Activated CD4-positive, alpha-beta memory T cell treated with anti-CD3 and anti-CD28 coated beads, Interleukin-2, amount 10 ng/mL, durations not matched to agents 7 days and 5 days (primary cell): ENCODE measurements at regions of chr19 and their contacts with region 1.

Region 1: DNA sequence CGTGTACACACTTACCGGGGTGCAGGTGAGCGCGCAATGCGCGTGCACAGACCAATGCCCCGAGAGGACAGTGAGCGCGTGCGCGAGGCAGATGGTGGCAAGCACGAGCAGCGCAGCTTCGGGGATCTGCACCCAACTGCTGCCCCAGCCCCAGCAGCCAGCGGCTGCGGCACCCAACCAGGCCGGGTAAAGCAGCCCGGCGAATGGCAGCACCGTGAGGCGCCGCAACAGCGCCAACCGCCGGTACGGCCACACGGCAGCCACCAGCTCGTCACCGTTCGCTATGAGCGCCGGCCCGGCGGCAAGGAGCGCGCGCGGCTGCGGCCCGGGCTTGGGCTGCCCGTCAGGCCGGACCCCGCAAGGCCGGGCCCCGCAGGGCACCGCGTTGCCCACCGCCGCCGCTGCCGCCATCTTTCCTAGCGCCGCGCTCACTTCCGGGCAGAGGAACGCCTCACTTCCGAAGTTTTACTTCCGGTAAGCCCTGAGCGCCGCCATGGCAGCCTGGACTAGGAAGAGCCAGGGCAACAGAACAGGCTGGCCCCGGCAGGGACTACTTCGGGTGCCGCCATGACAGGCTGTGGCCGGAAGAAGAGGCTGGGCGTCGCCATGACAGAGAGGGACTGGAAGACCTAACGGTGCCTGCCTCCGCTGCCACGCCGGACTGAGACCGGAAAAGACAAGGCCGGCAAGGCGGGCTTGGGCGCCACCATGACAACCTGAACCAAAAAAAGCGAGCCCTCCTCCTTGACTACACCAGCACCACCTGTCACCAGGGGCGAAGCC is at the start of gene ATP13A1:
- DNase-seq: peak; percentile 95
- H3K4me3 Mint-ChIP-seq: peak within 1 kb of the TSS; percentile 81
- H3K27ac Mint-ChIP-seq: peak within 1 kb of the TSS; percentile 98
- H3K4me1 Mint-ChIP-seq: peaks cover 40% of the 10 kb centered on the region
- H3K27me3 Mint-ChIP-seq: no peaks in the 10 kb centered on the region
- total RNA-seq, gene ATP13A1: 102 to 107 TPM

Region 2: DNA sequence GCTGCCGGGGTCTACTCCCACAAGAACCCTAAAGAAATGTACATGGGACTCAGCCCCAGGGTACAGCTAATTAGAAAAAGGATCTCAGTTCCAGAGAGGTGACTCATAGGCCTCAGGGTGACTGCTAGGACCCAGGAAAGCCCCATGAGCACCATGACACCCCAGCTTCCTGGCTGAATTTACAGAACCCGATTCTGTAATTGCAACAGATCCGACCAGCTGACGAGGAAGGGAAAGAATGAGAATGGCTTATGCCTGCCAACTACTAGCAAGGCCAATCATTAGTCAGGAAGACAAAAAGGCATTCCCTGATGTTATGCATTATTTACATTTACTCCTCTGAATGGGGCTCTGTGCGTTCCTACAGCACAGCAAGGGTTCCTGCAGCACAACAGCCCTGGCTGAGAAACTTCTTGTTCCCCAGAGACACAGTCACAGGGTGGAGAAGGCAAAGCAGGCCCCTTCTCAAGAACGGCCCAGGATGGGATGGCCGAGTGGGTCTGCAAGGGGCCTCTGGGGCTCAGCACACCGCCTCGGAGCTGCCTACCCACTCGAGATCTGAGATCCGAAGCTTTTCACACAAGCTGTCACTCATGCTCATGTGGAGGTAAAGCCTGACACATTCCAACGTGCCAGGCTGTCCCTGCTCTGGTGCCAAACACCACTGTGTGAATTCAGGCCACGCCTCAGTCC is 72.2 kb before region 1 on chr19:
- CTCF ChIA-PET with region 1: interaction called, 5 read pairs
- POLR2A ChIA-PET with region 1: interaction called, 22 read pairs
- DNase-seq: peak; percentile 80
- H3K4me3 Mint-ChIP-seq: peak overlapping the region; percentile 43
- H3K27ac Mint-ChIP-seq: peak overlapping the region; percentile 93
- H3K4me1 Mint-ChIP-seq: peaks cover 80% of the 10 kb centered on the region
- H3K27me3 Mint-ChIP-seq: no peaks in the 10 kb centered on the region

Region 3: GRCh38 chr19:19627621-19628500 is 35.6 kb before region 1 on chr19 and contains the start of gene LPAR2:
- CTCF ChIA-PET with region 1: no interaction called
- POLR2A ChIA-PET with region 1: interaction called, 17 read pairs
- DNase-seq: peak; percentile 74
- H3K4me3 Mint-ChIP-seq: peak within 1 kb of the TSS; percentile 83
- H3K27ac Mint-ChIP-seq: peak within 1 kb of the TSS; percentile 91
- H3K4me1 Mint-ChIP-seq: peaks cover 32% of the 10 kb centered on the region
- H3K27me3 Mint-ChIP-seq: no peaks in the 10 kb centered on the region
- total RNA-seq, gene LPAR2: 43.2 to 46.2 TPM

Region 4: DNA sequence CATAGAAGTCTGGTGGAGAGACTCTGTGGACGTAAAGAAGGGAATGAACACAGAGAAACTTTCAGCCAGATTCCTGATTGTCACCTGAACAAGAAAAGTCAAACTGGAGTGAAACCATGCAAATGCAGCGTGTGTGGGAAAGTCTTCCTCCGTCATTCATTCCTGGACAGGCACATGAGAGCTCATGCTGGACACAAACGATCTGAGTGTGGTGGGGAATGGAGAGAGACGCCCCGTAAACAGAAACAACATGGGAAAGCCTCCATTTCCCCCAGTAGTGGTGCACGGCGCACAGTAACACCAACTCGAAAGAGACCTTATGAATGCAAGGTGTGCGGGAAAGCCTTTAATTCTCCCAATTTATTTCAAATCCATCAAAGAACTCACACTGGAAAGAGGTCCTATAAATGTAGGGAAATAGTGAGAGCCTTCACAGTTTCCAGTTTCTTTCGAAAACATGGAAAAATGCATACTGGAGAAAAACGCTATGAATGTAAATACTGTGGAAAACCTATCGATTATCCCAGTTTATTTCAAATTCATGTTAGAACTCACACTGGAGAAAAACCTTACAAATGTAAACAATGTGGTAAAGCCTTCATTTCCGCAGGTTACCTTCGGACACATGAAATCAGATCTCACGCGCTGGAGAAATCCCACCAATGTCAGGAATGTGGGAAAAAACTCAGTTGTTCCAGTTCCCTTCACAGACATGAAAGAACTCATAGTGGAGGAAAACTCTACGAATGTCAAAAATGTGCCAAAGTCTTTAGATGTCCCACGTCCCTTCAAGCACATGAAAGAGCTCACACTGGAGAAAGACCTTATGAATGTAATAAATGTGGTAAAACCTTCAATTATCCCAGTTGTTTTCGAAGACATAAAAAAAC is 16.0 kb after region 1 on chr19:
- CTCF ChIA-PET with region 1: no interaction called
- POLR2A ChIA-PET with region 1: interaction called, 27 read pairs
- DNase-seq: no peak
- H3K4me3 Mint-ChIP-seq: no peak overlapping the region
- H3K27ac Mint-ChIP-seq: no peak overlapping the region
- H3K4me1 Mint-ChIP-seq: peaks cover 9% of the 10 kb centered on the region
- H3K27me3 Mint-ChIP-seq: no peaks in the 10 kb centered on the region

Region 5: DNA sequence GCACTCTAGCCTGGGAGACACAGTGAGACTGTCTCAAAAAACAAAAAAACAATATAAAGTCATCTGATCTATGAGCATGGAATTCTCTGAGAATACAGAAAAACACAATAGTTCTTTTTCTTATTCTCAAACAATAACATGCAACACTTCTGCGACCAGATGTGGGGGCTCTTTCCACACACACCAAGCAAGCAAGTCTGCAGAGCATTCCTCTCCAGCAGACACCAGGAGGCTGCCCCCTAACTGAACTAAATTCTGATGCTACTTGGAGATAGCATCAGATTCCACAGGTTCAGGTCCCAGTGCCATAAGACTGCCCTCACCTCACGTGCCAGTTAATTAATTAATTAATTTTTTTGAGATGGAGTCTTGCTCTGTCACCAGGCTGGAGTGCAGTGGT is 32.9 kb after region 1 on chr19:
- CTCF ChIA-PET with region 1: no interaction called
- POLR2A ChIA-PET with region 1: no interaction called
- DNase-seq: no peak
- H3K4me3 Mint-ChIP-seq: no peak overlapping the region
- H3K27ac Mint-ChIP-seq: no peak overlapping the region
- H3K4me1 Mint-ChIP-seq: no peaks in the 10 kb centered on the region
- H3K27me3 Mint-ChIP-seq: no peaks in the 10 kb centered on the region

Region 6: DNA sequence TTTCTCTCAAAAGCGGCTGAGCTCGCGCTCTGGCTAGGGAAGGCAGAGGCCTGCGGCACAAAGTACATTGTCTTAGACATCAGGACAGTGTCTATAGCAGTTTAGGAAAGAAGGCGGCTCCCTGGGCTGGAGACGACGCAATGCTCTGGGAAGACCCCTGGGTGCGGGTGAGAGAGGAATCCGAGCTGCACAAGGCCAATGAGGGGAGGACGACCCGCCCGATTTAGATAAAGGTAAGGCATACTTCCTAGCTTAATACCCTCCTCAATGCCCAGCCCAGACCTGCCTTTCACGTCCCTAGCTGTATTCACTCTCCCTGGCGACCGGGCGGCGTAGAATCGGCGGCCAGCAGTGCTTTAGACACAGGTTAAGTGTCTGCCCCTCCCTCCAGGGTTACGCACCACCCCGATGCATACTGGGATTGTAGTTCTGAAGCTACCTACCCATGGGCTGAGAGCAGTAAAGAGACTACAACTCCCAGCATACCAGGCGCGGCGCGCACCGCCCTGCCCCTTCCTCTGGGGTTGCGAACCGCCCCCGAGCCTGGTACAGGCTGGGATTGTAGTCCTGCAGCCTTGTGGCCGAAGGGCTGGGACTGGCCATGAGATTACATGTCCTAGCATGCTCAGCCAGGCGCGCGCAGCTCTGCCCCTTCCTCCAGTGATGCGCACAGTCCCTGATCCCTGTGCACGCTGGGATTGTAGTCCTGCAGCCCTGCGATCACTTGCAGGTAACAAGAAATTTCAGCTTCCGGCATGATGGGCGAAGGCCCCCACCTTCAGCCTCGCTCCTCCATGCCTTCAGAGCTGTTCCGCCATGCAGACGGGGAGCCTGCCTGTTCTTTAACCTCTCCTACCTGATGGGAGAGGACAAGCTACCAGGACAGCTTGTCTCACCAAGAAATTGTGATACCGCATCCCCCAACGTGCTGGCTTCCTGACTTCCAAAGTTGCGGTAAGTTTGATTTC is 112.9 kb after region 1 on chr19:
- CTCF ChIA-PET with region 1: no interaction called
- POLR2A ChIA-PET with region 1: interaction called, 22 read pairs
- DNase-seq: peak; percentile 94
- H3K4me3 Mint-ChIP-seq: peak overlapping the region; percentile 92
- H3K27ac Mint-ChIP-seq: peak overlapping the region; percentile 77
- H3K4me1 Mint-ChIP-seq: peaks cover 41% of the 10 kb centered on the region
- H3K27me3 Mint-ChIP-seq: no peaks in the 10 kb centered on the region

Region 7: DNA sequence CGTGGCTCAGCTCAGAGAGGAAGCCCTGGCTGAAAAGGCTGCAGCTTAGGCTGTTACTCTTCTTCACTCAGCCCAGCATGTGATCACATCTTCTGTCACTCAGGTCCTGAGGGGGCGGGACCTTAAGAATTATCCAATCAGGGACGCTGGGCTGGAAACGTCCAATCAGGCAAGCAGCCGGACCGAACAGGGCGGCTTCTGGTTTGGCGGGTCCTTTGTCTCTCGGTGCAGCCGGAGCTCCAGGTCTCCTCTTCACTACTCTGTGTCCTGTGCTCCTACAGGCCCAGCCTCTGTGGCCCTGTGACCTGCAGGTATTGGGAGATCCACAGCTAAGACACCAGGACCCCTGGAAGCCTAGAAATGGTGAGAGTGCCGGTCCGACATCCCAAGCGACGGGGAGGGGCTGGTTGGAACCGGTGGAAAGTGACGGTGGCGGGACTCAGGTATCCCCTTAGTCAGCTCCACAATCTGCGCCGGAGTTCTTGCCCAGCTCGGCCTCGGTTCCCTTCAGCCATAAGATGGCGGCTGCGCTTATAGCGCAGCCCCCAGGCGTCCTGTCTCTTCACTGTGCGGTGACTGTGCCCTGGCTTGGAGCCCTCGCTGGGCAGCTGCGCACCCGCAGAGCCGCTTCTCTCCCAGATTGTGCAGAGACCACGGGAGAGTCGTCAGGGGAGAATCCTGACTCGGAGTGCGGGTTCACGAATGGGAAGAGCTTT is 237.4 kb after region 1 on chr19 and contains the start of gene ZNF93:
- CTCF ChIA-PET with region 1: no interaction called
- POLR2A ChIA-PET with region 1: interaction called, 32 read pairs
- DNase-seq: peak; percentile 93
- H3K4me3 Mint-ChIP-seq: peak within 1 kb of the TSS; percentile 96
- H3K27ac Mint-ChIP-seq: peak within 1 kb of the TSS; percentile 93
- H3K4me1 Mint-ChIP-seq: peaks cover 31% of the 10 kb centered on the region
- H3K27me3 Mint-ChIP-seq: no peaks in the 10 kb centered on the region
- total RNA-seq, gene ZNF93: 11.4 to 11.7 TPM

Region 8: DNA sequence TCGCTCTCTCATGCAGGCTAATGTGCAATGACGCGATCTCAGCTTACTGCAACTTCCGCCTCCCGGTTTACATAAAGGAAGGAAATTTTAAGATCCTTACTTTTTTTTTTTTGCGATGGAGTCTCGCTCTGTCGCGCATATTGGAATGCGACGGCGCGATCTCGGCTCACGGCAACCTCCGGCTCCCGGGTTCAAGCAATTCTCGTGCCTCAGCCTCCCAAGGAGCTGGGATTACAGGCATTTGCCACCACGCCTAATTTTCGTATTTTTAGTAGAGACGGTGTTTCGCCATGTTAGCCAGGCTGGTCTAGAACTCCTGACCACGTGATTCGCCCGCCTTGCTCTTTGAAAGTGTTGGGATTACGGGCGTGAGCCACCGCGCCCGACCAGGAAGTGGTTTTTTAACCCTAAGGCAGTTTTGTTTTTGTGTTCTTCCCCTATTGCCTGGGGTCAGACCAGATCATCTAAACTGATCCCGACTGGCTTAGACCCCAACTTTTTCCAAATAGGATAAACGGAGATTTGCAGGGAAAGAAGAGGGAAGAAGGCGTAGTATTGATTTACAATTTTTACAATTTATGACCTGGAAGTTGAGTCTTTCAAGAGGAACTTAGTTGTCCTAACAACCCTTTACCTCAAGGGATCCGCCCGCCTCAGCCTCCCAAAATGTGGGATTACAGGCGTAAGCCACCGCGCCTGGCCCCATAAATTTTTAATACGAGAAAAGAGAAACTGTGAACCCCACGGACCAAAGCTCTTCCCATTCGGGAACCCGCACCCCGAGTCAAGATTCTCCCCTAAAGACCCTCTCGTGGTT is 760.1 kb after region 1 on chr19:
- CTCF ChIA-PET with region 1: no interaction called
- POLR2A ChIA-PET with region 1: interaction called, 16 read pairs
- DNase-seq: peak; percentile 42
- H3K4me3 Mint-ChIP-seq: peak overlapping the region; percentile 97
- H3K27ac Mint-ChIP-seq: peak overlapping the region; percentile 97
- H3K4me1 Mint-ChIP-seq: peaks cover 13% of the 10 kb centered on the region
- H3K27me3 Mint-ChIP-seq: no peaks in the 10 kb centered on the region